ENCODE measurements at regions of chr17 and their contacts with region 1.

Region 1: DNA sequence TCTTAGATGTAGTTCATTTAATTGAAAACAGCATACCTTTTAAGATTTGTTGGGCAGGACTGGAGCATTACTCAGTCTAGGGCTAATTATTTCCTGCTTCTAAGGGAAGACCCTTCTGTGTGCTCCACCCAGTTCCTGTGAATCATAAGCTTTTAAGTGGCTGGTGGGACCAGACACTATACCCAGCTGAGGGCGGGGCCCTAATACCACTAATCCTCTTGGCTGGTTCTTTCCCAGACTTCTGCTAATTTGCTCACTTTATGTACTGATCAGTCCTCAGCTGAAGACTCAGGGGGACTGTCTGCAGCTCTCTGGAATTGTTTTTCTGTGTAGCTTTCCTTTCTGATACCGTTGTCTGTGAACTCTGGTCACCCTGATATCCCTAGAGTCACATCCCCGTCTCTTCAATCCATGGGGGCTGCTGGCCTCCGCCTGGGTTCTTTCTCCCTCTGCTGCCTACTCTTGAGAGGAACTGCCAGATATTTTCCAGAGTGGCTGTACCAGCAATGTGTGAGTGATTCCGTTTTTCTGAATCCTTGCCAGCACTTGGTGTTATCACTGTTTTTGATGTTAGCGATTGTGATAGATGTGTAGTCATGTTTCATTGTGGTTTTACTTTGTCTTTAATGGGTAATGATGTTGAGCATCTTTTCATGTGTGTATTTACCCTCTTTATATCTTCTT is 35.1 kb downstream of the MFSD11 start:
- DNase-seq: peak; percentile 89
- ATAC-seq: peak; percentile 98
- H3K4me3 ChIP-seq: peak overlapping the region; percentile 35 to 55
- H3K27ac ChIP-seq: peak overlapping the region; percentile 83
- H3K4me1 ChIP-seq: peaks cover 24 to 32% of the 10 kb centered on the region in 2 experiments
- H3K27me3 ChIP-seq: no peaks in the 10 kb centered on the region
- CTCF ChIP-seq: 0 out of 6 replicates have a peak, but pooled peaks of 1 of the 3 experiments have one; percentile 12
- POLR2A ChIP-seq: no peak
- RAD21 ChIP-seq: peak; percentile 44

Region 2: GRCh38 chr17:76744747-76745146 is 28.2 kb before region 1 on chr17:
- CTCF ChIA-PET with region 1: no interaction called
- POLR2A ChIA-PET with region 1: no interaction called
- RAD21 ChIA-PET with region 1: no interaction called
- intact Hi-C with region 1: loop called (anchors 2 kb)
- DNase-seq: no peak
- ATAC-seq: no peak
- H3K4me3 ChIP-seq: no peak overlapping the region
- H3K27ac ChIP-seq: no peak overlapping the region
- H3K4me1 ChIP-seq: peaks cover 0 to 12% of the 10 kb centered on the region in 2 experiments; a peak in 2 of 4 replicates
- H3K27me3 ChIP-seq: no peaks in the 10 kb centered on the region
- CTCF ChIP-seq: no peak
- POLR2A ChIP-seq: no peak
- RAD21 ChIP-seq: no peak

Measured in HCT116 (cell line).